ENCODE measurements at regions of chr19 and their contacts with region 1.

Region 1: DNA sequence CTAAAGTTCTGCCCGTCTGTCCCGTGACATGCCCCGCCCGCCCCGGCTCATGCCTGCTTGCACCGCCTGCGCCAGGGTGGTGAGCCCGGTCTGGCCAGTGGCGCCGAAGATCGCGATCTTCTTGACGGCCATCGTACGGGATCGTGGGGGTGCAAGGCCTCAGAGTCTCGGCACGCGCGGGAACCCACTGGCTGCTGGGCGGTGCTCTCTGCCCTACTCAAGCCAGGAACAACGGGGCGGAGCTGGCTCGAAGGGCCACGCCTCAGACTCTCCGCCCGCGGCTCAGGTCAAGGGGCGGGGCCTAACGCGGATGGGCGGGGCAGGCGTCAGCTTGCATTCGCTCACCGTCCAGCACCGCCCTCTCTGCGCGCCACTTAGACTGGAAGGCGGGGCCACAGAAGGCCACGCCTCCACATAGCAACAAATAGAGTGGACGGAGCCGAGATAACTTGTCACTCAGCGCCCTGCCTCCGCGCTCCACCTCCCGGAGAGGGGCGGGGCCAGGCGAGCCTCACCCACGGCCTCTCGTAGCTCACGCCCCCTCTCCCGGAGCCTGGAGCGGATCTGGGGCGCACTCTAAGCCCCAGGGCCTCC is at the start of gene BLVRB:
- DNase-seq: peak; percentile 99
- CTCF ChIP-seq: no peak

Region 2: GRCh38 chr19:40298026-40298425 is 167.6 kb before region 1 on chr19:
- CTCF ChIA-PET with region 1: no interaction called
- POLR2A ChIA-PET with region 1: no interaction called
- DNase-seq: no peak
- CTCF ChIP-seq: no peak

Region 3: DNA sequence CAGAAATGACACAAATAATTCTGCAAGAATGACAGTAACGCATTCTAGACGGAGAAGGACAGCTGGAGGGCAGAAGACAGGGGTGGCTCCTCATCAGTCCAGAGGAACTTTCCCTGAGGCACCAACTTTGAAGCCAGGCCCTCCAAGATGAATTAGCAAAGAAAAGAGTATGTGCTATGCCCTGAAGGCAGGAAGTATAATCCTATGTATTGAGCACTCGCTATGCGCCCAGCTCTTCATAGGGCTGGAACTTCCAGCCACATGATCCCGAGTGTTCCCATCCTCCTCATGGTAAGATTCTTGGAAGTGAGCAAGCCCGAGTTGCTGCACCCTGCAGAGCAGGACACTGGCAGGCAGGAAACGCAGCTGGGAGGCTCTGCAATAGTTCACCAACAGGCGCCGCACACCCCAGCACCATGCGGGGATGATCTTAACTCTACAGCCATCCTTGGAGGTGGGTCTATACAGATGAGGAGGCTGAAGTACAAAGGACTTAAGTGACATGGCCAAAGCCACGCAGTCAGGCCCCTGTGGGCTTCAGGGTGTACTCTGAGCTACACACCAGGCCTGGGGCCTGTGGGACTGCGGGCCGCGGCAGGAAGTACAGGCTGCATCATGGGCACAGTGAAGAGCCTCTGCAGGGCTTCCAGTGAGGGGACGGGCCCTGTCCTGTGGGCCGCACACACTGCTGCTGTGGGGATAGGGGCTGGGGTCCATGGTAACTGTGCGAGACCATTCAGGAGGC is 142.6 kb before region 1 on chr19:
- CTCF ChIA-PET with region 1: no interaction called
- POLR2A ChIA-PET with region 1: no interaction called
- DNase-seq: no peak
- CTCF ChIP-seq: no peak

Region 4: GRCh38 chr19:40416918-40417642 is 48.6 kb before region 1 on chr19:
- CTCF ChIA-PET with region 1: interaction called, 42 read pairs
- POLR2A ChIA-PET with region 1: interaction called, 5 read pairs
- DNase-seq: peak; percentile 33
- CTCF ChIP-seq: no peak

Region 5: DNA sequence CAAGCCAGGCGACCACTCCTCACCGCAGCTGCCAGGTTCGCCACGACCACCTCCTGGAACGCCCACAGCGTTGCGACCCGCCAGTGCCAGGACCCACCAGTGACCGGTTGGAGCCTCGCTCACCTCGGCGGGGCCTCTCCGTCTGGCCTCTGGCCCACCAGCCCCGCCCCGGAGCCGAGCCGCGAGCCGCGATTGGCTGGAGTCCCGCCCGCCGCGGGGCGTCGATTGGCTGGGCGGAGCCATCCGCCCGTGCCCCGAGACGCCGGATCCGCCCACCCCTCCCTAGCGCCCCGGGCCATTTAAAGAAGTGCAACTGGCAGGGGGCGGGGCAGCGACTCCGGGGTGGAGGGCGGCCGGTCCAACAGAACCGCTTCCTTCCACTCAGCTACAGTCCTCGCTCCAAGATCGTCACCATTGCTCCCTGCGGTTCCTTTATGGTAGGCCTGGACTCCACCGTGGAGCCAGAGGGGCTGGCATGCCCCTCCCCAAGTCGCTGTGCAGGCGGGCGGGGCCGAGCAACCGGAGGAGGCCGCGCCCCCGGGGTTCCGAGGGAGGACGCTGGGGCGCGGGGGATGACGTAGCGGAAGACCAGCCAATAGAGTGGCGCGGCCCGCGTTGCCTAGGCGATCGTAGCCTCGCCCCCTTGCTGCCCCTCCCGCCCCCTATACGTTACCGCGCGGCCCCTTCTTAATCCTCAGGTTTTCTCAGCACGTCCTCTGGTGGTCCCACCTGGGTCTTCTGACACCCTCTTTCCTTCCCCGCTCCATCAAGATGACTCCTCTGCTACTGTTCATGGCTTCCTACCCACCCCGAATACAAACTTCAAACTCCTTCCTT is 21.2 kb before region 1 on chr19 and contains the start of gene SERTAD3:
- CTCF ChIA-PET with region 1: interaction called, 17 read pairs
- POLR2A ChIA-PET with region 1: interaction called, 9 read pairs
- DNase-seq: peak; percentile 98
- CTCF ChIP-seq: peak; percentile 60

Region 6: GRCh38 chr19:40489882-40490230 is 24.2 kb after region 1 on chr19:
- CTCF ChIA-PET with region 1: interaction called, 12 read pairs
- POLR2A ChIA-PET with region 1: no interaction called
- DNase-seq: no peak
- CTCF ChIP-seq: no peak

Region 7: GRCh38 chr19:40523322-40524047 is 57.8 kb after region 1 on chr19:
- CTCF ChIA-PET with region 1: interaction called, 23 read pairs
- POLR2A ChIA-PET with region 1: no interaction called
- DNase-seq: peak; percentile 68
- CTCF ChIP-seq: peak; percentile 73

Region 8: GRCh38 chr19:40623403-40624251 is 158.0 kb after region 1 on chr19:
- CTCF ChIA-PET with region 1: no interaction called
- POLR2A ChIA-PET with region 1: no interaction called
- DNase-seq: no peak
- CTCF ChIP-seq: no peak

Region 9: GRCh38 chr19:40662921-40663694 is 197.5 kb after region 1 on chr19:
- CTCF ChIA-PET with region 1: no interaction called
- POLR2A ChIA-PET with region 1: no interaction called
- DNase-seq: peak; percentile 92
- CTCF ChIP-seq: peak; percentile 99

Measured in GM10248 (cell line).